Endothelial cell of umbilical vein (primary cell): ENCODE measurements at regions of chr14 and their contacts with region 1.

Region 1: DNA sequence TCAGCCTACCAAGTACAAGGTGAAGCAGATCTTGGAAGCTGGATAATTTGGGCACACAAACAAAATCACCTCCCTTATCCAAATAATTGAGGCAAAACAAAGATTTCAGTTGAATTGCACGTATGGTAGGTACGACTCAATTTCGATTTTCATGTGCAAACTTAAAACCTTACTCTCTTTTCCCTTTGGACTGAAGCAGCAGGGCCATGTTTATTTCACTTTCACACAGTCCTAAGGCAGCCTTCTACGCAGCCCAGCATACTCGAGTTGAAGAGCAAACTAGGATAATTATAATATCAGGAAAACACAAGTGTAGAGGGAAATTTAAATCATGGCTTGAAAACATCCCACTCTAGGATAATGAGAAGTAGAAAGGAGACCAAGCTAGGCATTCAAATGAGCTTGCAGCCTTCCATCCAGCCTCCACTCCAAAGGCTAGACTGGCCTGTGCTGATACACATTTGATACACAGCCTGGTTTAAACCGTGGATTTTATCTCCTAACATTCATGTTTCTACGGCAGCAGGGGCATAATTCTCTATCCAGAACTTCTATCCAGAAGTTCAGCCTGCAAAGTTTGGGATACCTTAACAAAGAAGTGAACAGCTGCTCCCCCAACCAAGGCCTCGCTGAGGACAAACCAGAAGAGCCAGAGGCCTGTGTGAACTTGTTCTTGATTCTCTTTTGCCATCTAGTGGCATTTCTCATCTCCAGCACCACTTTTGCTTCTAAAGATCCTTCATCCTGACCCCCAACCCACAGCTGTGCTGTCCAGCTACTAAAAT is 2.4 kb upstream of the RNASE7 start:
- DNase-seq: peak; percentile 46
- H3K4me3 ChIP-seq: no peak overlapping the region
- H3K27ac ChIP-seq: no peak overlapping the region
- H3K4me1 ChIP-seq: peaks cover 4% of the 10 kb centered on the region
- H3K27me3 ChIP-seq: peaks cover 10 to 15% of the 10 kb centered on the region in 2 experiments
- CTCF ChIP-seq: peak; percentile 41 to 59
- POLR2A ChIP-seq: no peak

Region 2: DNA sequence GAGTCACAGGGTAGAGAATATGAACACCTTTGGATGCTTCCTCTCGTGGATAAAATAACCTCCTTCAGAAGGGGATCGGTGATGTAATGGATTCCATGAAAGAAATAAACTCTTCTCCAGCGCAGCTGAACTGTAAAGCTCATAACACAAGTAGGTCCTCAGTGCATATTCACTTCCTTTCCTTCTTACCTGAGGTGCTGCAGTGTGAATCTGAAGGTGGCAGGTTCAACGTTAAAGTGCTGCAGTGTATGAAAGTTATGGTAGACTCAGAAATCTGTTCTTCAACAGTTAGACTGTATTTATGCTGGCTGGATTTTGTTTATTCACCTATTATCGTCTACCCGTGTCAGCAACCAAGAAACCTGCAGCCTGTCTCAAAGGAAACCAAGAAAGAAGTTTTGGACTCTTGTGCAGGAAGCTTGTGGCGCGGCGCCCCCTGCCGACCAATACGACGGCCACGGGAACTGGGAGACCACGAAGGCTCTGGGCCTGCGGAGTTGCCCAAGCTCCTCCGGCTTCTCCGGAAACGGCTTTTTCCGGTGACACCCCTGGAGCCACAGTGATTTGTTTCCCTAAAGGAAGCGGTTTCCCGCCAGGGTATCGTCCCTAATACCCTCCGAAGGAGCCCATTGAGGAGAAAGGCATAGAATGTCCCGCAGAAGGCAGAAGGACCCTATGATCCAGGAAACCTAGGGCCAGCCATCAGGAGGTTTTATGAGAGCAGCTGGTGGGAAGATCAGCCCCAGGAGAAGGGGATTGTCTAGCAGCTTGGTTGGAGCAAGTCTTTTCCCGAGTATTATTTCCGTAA is 166.2 kb before region 1 on chr14:
- CTCF ChIA-PET with region 1: interaction called, 10 read pairs
- POLR2A ChIA-PET with region 1: no interaction called
- dilution Hi-C with region 1: no loop called
- intact Hi-C with region 1: no loop called
- DNase-seq: peak; percentile 73
- H3K4me3 ChIP-seq: peak overlapping the region in 1 of 3 experiments; percentile 15
- H3K27ac ChIP-seq: no peak overlapping the region
- H3K4me1 ChIP-seq: peaks cover 7% of the 10 kb centered on the region
- H3K27me3 ChIP-seq: peaks cover 5 to 8% of the 10 kb centered on the region in 2 experiments
- CTCF ChIP-seq: peak; percentile 87 to 95
- POLR2A ChIP-seq: no peak

Region 3: DNA sequence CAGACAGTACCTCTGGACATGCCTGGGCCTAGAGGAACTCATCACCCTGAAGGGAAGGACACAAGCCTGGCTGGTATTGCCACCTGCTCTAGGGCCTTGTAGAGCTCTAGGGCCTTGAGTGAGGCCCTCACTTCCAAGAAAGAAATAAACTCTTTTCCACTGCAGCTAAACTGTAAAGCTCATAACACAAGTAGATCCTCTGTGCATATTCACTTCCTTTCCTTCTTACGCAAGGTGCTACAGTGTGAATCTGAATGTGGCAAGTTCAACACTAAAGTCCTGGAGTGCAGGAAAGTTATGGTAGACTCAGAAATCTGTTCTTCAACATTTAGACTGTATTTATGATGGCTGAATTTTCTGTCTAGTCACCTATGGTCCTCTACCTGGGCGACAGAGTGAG is 134.1 kb before region 1 on chr14:
- CTCF ChIA-PET with region 1: no interaction called
- POLR2A ChIA-PET with region 1: no interaction called
- dilution Hi-C with region 1: no loop called
- intact Hi-C with region 1: no loop called
- DNase-seq: no peak
- H3K4me3 ChIP-seq: no peak overlapping the region
- H3K27ac ChIP-seq: no peak overlapping the region
- H3K4me1 ChIP-seq: no peaks in the 10 kb centered on the region
- H3K27me3 ChIP-seq: no peaks in the 10 kb centered on the region
- CTCF ChIP-seq: no peak
- POLR2A ChIP-seq: no peak

Region 4: GRCh38 chr14:21003788-21004346 is 35.9 kb before region 1 on chr14:
- CTCF ChIA-PET with region 1: interaction called, 10 read pairs
- POLR2A ChIA-PET with region 1: no interaction called
- dilution Hi-C with region 1: no loop called
- intact Hi-C with region 1: no loop called
- DNase-seq: no peak
- H3K4me3 ChIP-seq: no peak overlapping the region
- H3K27ac ChIP-seq: no peak overlapping the region
- H3K4me1 ChIP-seq: no peaks in the 10 kb centered on the region
- H3K27me3 ChIP-seq: no peaks in the 10 kb centered on the region
- CTCF ChIP-seq: no peak
- POLR2A ChIP-seq: no peak

Region 5: GRCh38 chr14:21220874-21221477 is 181.2 kb after region 1 on chr14:
- CTCF ChIA-PET with region 1: no interaction called
- POLR2A ChIA-PET with region 1: no interaction called
- dilution Hi-C with region 1: no loop called
- intact Hi-C with region 1: no loop called
- DNase-seq: no peak
- H3K4me3 ChIP-seq: no peak overlapping the region
- H3K27ac ChIP-seq: no peak overlapping the region
- H3K4me1 ChIP-seq: peaks cover 40% of the 10 kb centered on the region
- H3K27me3 ChIP-seq: no peaks in the 10 kb centered on the region
- CTCF ChIP-seq: no peak
- POLR2A ChIP-seq: no peak

Region 6: DNA sequence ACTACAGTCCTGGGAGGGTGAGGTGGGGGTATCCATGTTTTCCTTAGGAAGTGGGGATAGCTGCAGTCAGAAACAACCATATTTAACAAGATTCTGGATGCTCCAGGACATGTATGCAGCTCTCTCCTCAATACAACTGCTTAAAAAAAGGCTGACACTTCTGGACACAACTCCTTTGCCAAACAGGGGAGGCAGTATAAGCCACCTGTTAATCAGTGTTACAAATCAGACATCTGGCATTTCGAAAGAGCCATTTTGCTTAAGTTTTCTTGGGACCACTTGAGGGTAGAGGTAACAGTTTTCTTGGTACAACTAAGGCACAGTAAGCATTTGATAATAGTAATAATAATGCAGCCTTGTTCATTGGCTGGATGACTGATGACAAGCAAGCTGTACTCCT is 287.2 kb after region 1 on chr14:
- CTCF ChIA-PET with region 1: no interaction called
- POLR2A ChIA-PET with region 1: no interaction called
- dilution Hi-C with region 1: no loop called
- intact Hi-C with region 1: no loop called
- DNase-seq: no peak
- H3K4me3 ChIP-seq: no peak overlapping the region
- H3K27ac ChIP-seq: no peak overlapping the region
- H3K4me1 ChIP-seq: no peaks in the 10 kb centered on the region
- H3K27me3 ChIP-seq: peaks cover 4 to 6% of the 10 kb centered on the region in 2 experiments
- CTCF ChIP-seq: no peak
- POLR2A ChIP-seq: no peak